Activated CD4-positive, alpha-beta memory T cell treated with anti-CD3 and anti-CD28 coated beads, Interleukin-2, amount 10 ng/mL, durations not matched to agents 7 days and 5 days (primary cell): ENCODE measurements at regions of chr11 and their contacts with region 1.

Region 1: DNA sequence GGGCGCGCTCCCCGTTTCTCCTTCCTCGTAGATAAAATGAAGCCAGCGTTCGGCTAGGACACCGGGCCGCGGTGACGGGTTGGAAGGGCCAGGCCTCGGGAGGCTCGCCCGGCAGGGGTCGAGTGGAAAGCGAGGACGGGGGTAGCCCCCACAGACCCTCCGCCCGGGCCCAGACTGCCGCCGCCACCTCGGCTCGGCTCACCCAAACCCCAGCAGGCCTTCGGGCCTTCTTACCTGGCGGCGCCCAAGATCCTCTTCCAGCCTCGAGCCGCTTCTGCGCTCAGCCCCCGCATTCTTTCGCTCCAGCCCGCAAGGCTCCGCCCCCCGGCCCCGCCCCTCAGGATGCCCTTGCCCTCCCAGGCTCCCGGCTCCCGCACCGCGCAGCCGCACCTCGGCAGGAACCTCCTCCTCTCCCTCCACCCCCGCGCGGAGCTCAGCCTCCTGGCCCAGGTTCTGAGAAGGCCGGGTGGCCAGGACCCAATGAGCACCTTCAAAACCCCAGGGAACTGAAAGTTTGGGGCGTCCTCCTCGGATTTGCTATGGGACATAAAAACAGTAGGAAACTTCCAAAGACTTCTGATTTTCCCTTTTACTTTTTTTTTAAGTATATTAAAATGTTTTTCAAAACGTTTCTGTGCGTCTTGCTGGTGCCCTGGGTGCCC is at the start of gene CD59:
- DNase-seq: peak; percentile 88
- H3K4me3 Mint-ChIP-seq: peak within 1 kb of the TSS; percentile 83
- H3K27ac Mint-ChIP-seq: peak within 1 kb of the TSS; percentile 81
- H3K4me1 Mint-ChIP-seq: peaks cover 35% of the 10 kb centered on the region
- H3K27me3 Mint-ChIP-seq: no peaks in the 10 kb centered on the region
- total RNA-seq, gene CD59: 153 to 158 TPM

Region 2: GRCh38 chr11:33700425-33701271 is 35.6 kb before region 1 on chr11 and contains the start of gene C11orf91:
- CTCF ChIA-PET with region 1: interaction called, 3 read pairs
- POLR2A ChIA-PET with region 1: interaction called, 30 read pairs
- DNase-seq: peak; percentile 95
- H3K4me3 Mint-ChIP-seq: peak within 1 kb of the TSS; percentile 77
- H3K27ac Mint-ChIP-seq: peak within 1 kb of the TSS; percentile 63
- H3K4me1 Mint-ChIP-seq: peaks cover 21% of the 10 kb centered on the region
- H3K27me3 Mint-ChIP-seq: peaks cover 27% of the 10 kb centered on the region
- total RNA-seq, gene C11orf91: not detected

Region 3: GRCh38 chr11:33716236-33716635 is 20.0 kb before region 1 on chr11:
- CTCF ChIA-PET with region 1: interaction called, 22 read pairs
- POLR2A ChIA-PET with region 1: interaction called, 8 read pairs
- DNase-seq: no peak
- H3K4me3 Mint-ChIP-seq: no peak overlapping the region
- H3K27ac Mint-ChIP-seq: no peak overlapping the region
- H3K4me1 Mint-ChIP-seq: peaks cover 14% of the 10 kb centered on the region
- H3K27me3 Mint-ChIP-seq: no peaks in the 10 kb centered on the region

Region 4: GRCh38 chr11:33722579-33723225 is 13.6 kb before region 1 on chr11:
- CTCF ChIA-PET with region 1: interaction called, 4 read pairs
- POLR2A ChIA-PET with region 1: interaction called, 26 read pairs
- DNase-seq: peak; percentile 69
- H3K4me3 Mint-ChIP-seq: no peak overlapping the region
- H3K27ac Mint-ChIP-seq: peak overlapping the region; percentile 76
- H3K4me1 Mint-ChIP-seq: peaks cover 63% of the 10 kb centered on the region
- H3K27me3 Mint-ChIP-seq: no peaks in the 10 kb centered on the region

Region 5: GRCh38 chr11:33773404-33773986 is 37.2 kb after region 1 on chr11:
- CTCF ChIA-PET with region 1: no interaction called
- POLR2A ChIA-PET with region 1: interaction called, 14 read pairs
- DNase-seq: peak; percentile 47
- H3K4me3 Mint-ChIP-seq: peak overlapping the region; percentile 94
- H3K27ac Mint-ChIP-seq: peak overlapping the region; percentile 83
- H3K4me1 Mint-ChIP-seq: peaks cover 53% of the 10 kb centered on the region
- H3K27me3 Mint-ChIP-seq: peaks cover 15% of the 10 kb centered on the region